Activated naive CD4-positive, alpha-beta T cell treated with anti-CD3 and anti-CD28 coated beads, Interleukin-2, amount 10 ng/mL, durations not matched to agents 7 days and 5 days (primary cell): ENCODE measurements at regions of chr15 and their contacts with region 1.

Region 1: DNA sequence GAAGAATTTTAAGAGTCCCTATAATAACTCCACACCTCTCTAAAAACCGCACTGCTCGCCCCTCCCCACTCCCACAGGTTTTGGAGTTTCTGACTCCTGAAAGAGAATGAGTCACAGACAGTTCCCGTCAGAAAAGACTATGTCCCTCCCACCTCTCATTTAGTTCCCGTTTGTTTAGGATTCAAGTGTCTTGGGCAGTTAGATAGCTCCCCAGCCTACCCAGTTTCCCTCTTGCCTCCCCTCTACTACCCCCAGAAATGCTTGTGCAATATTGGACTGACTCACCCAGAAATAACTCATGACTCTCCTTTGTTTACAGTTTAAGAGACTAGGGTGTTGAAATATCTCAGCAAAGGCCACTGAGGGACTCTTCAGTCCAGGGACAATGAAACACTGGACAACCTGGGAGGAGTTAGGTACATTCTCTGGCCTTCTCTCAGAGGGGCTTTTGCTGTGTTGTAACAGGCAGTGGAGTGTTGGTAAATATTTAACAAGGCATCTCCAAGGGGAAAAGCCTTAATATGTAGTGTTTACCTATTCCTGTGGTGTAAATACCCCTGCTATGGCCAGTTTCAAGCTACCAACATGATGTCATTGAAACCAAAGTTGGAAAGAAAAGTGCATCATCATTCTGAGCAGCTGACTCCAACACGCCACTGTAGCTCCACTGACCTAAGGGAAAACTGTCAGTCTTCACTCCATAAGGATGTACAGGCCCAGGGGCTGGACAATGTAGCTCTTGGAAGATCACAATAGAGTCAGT is 96.1 kb upstream of the CHD2 start:
- DNase-seq: peak; percentile 58
- H3K4me3 Mint-ChIP-seq: no peak overlapping the region
- H3K27ac Mint-ChIP-seq: peak overlapping the region; percentile 1
- H3K4me1 Mint-ChIP-seq: peaks cover 47% of the 10 kb centered on the region
- H3K27me3 Mint-ChIP-seq: no peaks in the 10 kb centered on the region

Region 2: GRCh38 chr15:92780843-92781242 is 23.2 kb before region 1 on chr15:
- CTCF ChIA-PET with region 1: no interaction called
- DNase-seq: no peak
- H3K4me3 Mint-ChIP-seq: no peak overlapping the region
- H3K27ac Mint-ChIP-seq: no peak overlapping the region
- H3K4me1 Mint-ChIP-seq: no peaks in the 10 kb centered on the region
- H3K27me3 Mint-ChIP-seq: no peaks in the 10 kb centered on the region

Region 3: GRCh38 chr15:92917606-92918407 is 113.8 kb after region 1 on chr15:
- CTCF ChIA-PET with region 1: interaction called, 68 read pairs
- DNase-seq: peak; percentile 96
- H3K4me3 Mint-ChIP-seq: peak overlapping the region; percentile 42
- H3K27ac Mint-ChIP-seq: peak overlapping the region; percentile 96
- H3K4me1 Mint-ChIP-seq: peaks cover 85% of the 10 kb centered on the region
- H3K27me3 Mint-ChIP-seq: no peaks in the 10 kb centered on the region